Sciatic nerve (tissue), 2 donors: ENCODE measurements at regions of chr9 and their contacts with region 1.

Region 1: DNA sequence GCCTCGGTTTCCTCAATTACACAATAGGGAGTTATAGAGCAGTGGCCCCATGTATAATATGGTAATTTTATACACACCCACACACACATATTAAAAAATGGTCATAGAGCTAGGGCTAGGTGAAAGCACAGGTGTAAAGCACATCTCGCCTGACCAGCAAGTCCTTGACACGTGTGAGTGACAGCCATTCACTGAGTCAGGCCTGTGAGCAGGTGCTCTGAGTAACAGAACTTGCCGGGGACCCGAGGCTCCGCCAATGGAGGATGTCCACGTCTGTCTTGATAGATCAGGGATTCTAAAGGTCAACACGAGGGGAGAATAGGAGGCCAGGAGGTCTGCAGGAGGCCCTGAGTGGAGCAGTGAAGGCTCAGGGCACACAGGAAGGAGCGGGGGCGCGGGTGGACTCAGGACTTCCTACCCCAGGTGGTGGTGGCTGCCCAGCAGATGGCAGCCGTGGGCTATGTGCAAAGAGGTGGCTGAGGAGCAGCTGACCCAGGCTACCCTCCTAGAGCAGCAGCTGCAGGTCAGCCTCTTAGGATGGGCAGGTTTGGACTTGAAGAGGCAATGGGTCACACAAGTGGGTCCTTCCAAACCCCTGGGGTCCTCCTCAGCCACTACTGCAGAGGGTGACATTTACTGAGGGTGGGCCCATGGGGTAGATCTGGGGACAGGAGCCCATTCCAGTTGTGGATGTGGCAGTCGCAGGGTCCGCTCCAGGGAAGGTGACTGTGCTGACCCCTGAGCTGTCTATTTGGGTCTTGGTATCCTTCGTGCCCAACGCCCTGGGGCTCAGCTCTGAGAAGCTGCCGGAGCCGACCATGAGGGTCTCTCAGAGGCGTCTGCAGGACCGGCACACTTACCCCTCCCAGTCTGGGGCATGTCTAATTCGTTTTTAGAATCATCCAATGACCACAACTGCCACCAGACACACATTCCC is 45.9 kb downstream of the PRRT1B start:
- DNase-seq: peak; percentile 89
- ATAC-seq: peak; percentile 95

Region 2: GRCh38 chr9:131578731-131579504 is 12.3 kb before region 1 on chr9:
- intact Hi-C with region 1: no loop called
- DNase-seq: no peak
- ATAC-seq: peak; percentile 56

Region 3: GRCh38 chr9:131656356-131657036 is 65.3 kb after region 1 on chr9:
- intact Hi-C with region 1: loop called (anchors 10 kb)
- DNase-seq: peak; percentile 78
- ATAC-seq: peak; percentile 88

Region 4: DNA sequence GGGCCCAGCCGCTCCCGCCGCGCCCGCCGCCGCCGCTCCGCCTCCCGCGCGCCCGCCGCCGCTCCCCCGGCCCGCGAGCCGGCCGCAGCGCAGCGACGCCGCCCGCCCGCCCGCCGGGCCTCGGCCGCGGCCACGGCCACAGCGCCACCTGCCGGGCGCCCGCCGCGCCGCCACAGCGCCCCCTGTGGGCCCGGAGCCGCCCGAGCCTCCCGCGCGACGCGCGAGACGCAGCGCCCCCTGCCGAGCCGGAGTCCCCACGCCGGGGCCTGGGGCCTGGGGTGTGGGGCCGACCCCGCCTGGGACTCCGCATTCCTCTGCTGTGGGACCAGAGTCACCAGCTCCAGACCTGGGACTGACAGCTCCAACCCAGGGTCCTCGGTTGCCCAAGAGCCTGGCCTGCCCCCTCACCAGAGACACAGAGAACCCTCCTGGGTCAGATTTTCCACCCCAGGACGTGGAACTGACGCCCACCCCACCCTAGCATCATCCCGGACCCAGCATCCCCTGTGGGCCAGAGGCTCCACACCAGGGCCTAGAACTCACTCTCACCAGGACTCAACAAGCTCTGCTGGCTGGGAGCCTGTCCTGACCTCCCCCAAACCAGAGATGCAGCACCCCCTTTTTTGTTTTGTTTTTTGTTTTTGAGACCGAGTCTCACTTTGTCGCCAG is 148.9 kb after region 1 on chr9 and contains the start of gene RAPGEF1:
- intact Hi-C with region 1: loop called (anchors 2 kb)
- DNase-seq: peak; percentile 87
- ATAC-seq: peak; percentile 79
- total RNA-seq, gene RAPGEF1: 69.4 TPM

Region 5: GRCh38 chr9:131839281-131840084 is 248.3 kb after region 1 on chr9:
- intact Hi-C with region 1: loop called (anchors 10 kb)
- DNase-seq: no peak
- ATAC-seq: peak; percentile 66

Region 6: DNA sequence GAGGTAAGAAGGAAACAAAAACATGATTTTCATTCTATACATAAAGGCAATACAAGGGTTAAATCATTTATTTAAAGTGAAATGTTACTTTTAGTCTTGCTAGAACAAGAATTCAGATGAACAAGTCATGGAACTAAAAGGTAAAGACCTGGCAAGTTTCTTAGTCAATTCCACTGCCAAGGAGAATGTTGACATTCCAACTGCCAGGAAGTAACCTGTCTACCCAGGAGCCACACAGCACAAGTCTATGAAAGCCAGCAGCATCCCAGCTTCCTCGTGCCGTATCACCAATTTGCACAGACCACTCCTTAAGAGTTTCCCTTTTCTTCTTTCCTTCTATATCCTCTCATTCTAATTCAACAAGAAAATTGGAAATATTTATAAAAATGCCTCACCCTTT is 683.7 kb after region 1 on chr9:
- intact Hi-C with region 1: loop called (anchors 10 kb)
- DNase-seq: no peak
- ATAC-seq: no peak